ENCODE measurements at regions of chr19 and their contacts with region 1.

Region 1: GRCh38 chr19:50779504-50780457 is 9.5 kb downstream of the GPR32 start:
- DNase-seq: no peak
- ATAC-seq: no peak
- H3K4me3 ChIP-seq: no peak overlapping the region
- H3K27ac ChIP-seq: no peak overlapping the region
- H3K4me1 ChIP-seq: no peaks in the 10 kb centered on the region
- H3K27me3 ChIP-seq: peaks cover 0 to 22% of the 10 kb centered on the region in 2 donors
- CTCF ChIP-seq: no peak
- POLR2A ChIP-seq: no peak

Region 2: GRCh38 chr19:50376166-50377050 is 403.4 kb before region 1 on chr19 and contains the start of gene NR1H2:
- intact Hi-C with region 1: loop called in 1 of 2 experiments (anchors 10 kb)
- DNase-seq: peak; percentile 94 to 97 (median 95)
- ATAC-seq: peak; percentile 91 to 97 (median 94)
- H3K4me3 ChIP-seq: peak within 1 kb of the TSS; percentile 83 to 99 (median 97)
- H3K27ac ChIP-seq: peak within 1 kb of the TSS; percentile 95 to 99 (median 98)
- H3K4me1 ChIP-seq: no peaks in the 10 kb centered on the region
- H3K27me3 ChIP-seq: no peaks in the 10 kb centered on the region
- CTCF ChIP-seq: no peak
- POLR2A ChIP-seq: peak; percentile 75
- total RNA-seq, gene NR1H2: 23.6 to 57.9 (median 33.8) TPM

Region 3: GRCh38 chr19:50537762-50538230 is 242.0 kb before region 1 on chr19:
- intact Hi-C with region 1: loop called (anchors 10 kb)
- DNase-seq: peak; percentile 65 to 80 (median 79)
- ATAC-seq: peak; percentile 78 to 90 (median 83)
- H3K4me3 ChIP-seq: no peak overlapping the region
- H3K27ac ChIP-seq: no peak overlapping the region
- H3K4me1 ChIP-seq: no peaks in the 10 kb centered on the region
- H3K27me3 ChIP-seq: no peaks in the 10 kb centered on the region
- CTCF ChIP-seq: peak; percentile 46 to 83 (median 75)
- POLR2A ChIP-seq: no peak

Region 4: DNA sequence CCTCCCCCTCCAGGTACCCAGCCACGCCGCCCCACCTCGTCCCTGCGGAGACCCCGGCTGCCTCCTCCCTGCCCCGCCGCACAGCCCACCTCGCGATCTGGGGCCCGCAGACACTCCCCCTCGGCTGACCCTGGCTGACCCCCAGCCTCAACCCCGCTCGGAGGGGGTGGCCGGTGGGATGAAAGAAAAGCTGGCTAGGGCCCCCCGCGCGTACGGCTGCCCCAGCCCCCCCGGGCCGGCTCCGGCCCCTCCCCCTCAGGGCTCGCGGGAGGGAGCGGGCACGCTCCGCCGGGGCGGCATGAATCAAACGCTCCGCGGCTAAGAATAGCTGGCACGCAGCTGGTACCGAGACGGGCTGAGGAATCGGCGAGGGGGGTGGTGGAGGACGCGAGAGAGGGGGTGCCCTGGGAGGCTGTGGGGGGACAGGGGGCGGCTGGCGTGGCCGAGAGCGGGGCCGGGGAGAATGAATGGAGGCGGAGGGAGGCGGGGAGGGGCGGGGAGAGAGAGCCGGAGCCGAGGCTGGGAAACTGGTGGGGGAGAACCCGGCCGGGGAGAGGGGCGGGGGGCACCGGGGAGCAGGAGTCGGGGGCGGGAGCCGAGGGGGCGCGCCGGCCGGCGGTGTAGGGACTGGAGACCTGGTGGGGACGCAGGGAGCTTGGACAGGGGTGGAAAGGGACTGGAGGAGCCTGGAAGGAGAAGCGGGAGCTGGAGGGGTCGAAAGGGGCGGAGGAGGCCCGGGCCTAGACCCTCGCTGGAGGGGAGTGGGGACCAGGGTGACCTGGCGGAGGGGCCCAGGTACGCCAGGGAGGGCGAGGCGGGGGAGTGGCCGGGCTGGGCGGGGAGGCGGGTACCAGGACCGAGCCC is 61.3 kb before region 1 on chr19:
- intact Hi-C with region 1: loop called in 1 of 2 experiments (anchors 10 kb)
- DNase-seq: no peak
- ATAC-seq: no peak
- H3K4me3 ChIP-seq: no peak overlapping the region
- H3K27ac ChIP-seq: no peak overlapping the region
- H3K4me1 ChIP-seq: no peaks in the 10 kb centered on the region
- H3K27me3 ChIP-seq: no peaks in the 10 kb centered on the region
- CTCF ChIP-seq: no peak
- POLR2A ChIP-seq: no peak

Region 5: GRCh38 chr19:50844296-50844935 is 64.6 kb after region 1 on chr19:
- intact Hi-C with region 1: no loop called
- DNase-seq: no peak
- ATAC-seq: no peak
- H3K4me3 ChIP-seq: no peak overlapping the region
- H3K27ac ChIP-seq: no peak overlapping the region
- H3K4me1 ChIP-seq: no peaks in the 10 kb centered on the region
- H3K27me3 ChIP-seq: no peaks in the 10 kb centered on the region
- CTCF ChIP-seq: no peak
- POLR2A ChIP-seq: no peak

Measured in right lobe of liver (tissue), 6 donors.